Heart left ventricle (tissue), 16 donors: ENCODE measurements at regions of chr7 and their contacts with region 1.

Region 1: GRCh38 chr7:11343818-11344413 is 370.2 kb downstream of the PHF14 start:
- DNase-seq: no peak
- ATAC-seq: no peak
- H3K4me3 ChIP-seq: peak overlapping the region in 1 of 12 donors; percentile 29
- H3K27ac ChIP-seq: no peak overlapping the region
- H3K4me1 ChIP-seq: peaks cover 0 to 5% (median 0%) of the 10 kb centered on the region in 12 donors
- H3K27me3 ChIP-seq: no peaks in the 10 kb centered on the region
- CTCF ChIP-seq: peak; percentile 54 to 81 (median 74)
- POLR2A ChIP-seq: no peak

Region 2: DNA sequence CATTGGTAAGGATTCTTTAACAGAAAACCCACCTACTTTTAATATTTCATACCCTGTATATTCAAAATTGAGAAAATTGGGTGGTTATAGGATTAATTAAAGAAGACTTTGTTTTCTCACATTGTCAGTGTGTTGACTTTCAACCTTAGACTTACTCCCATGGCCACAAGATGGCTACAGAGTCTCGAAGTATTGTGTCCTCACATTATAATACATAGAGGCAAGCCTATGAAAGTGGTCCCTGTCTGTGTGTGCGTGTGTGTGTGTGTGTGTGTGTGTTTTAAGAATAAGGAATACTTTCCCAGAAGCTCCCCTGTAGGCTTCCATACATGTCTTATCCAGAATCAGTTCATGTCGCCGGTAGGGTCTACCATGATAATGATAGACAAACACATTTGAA is 190.2 kb before region 1 on chr7:
- intact Hi-C with region 1: loop called in 1 of 10 experiments (anchors 10 kb)
- DNase-seq: no peak
- ATAC-seq: no peak
- H3K4me3 ChIP-seq: no peak overlapping the region
- H3K27ac ChIP-seq: no peak overlapping the region
- H3K4me1 ChIP-seq: no peaks in the 10 kb centered on the region
- H3K27me3 ChIP-seq: no peaks in the 10 kb centered on the region
- CTCF ChIP-seq: peak in 2 of 12 donors; percentile 5 to 17
- POLR2A ChIP-seq: no peak

Region 3: DNA sequence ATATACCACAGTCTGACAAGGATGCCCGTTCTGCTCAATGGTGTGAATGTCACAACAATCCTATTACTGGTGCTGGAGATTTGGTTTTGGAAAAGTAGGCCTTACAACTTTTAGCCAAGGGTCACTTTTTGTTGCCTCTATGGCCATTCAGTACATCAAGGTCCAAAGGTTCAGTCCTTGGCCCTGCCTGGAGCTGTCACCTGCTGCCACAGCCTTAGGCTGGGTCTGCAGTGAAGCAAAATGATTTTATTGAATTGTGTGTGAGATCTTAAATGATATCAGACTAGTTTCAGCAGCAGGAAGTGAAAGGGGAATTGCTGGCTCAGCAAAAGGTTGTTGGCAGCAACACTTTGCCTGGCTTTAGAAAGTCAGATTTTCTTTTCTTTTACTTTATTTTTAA is 60.4 kb after region 1 on chr7:
- intact Hi-C with region 1: no loop called
- DNase-seq: no peak
- ATAC-seq: no peak
- H3K4me3 ChIP-seq: no peak overlapping the region
- H3K27ac ChIP-seq: no peak overlapping the region
- H3K4me1 ChIP-seq: no peaks in the 10 kb centered on the region
- H3K27me3 ChIP-seq: no peaks in the 10 kb centered on the region
- CTCF ChIP-seq: no peak
- POLR2A ChIP-seq: no peak